AG04449 (cell line): ENCODE measurements at regions of chr6 and their contacts with region 1.

Region 1: GRCh38 chr6:30102970-30103874 is 9.7 kb downstream of the TRIM31 start:
- DNase-seq: peak; percentile 45
- H3K4me3 ChIP-seq: peak overlapping the region; percentile 56
- CTCF ChIP-seq: peak; percentile 86

Region 2: DNA sequence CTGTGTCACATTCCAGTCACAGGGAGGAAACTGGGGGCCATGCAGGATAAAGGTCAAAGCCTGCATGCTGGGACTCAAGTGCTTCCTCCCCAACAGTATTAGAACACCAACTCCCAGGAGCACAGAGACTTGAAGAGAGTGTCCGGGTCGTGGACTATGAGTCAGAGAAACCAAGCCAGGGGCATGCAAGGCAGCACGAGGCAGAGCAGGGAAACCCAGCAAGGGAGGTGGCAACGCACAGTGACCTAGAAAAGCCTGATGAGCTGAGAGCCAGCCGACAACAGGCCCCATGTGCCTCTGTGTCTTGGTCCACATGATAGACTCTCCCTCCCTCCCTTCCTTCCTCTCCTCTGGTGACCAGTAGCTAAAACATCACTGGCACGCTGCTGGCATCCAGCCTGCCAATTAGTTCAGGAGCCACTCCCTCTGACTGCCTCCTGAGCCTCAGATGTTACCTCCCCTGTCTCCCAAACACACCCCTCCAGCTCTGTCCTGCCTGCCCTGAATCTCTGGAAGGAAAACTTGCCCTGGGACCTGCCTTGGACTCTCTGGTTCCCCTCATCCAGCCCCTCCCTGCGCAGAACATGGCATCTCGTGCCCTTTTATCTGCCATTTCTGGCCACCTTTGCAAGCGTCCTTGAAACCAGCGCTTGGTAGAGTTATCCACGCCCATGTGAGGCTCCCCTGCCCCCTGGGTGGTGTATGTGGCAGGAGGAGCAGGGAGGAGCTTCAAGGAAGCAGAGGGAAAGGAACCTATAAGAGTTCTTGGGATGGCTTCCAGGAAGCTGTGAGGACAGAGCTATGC is 11.4 kb before region 1 on chr6:
- CTCF ChIA-PET with region 1: interaction called, 19 read pairs
- POLR2A ChIA-PET with region 1: interaction called, 4 read pairs
- DNase-seq: no peak
- H3K4me3 ChIP-seq: no peak overlapping the region
- CTCF ChIP-seq: no peak

Region 3: DNA sequence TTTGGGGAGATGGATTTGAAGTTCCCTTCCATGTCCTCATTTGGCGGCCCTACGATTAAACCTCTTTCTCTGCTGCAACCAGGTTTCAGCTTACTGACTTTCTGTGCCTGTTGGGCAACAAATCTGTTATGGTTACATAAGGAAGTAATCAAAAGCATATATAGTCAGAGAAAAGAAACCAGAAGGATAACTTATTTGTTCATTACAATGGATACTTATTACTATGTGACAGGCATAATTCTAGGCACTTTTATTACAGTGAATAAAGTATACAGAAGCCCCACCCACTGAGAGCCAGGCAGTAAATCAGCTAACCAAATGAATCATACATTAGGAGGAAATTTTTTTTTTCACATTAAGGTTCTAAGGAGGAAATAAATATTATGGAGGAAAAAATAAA is 19.3 kb after region 1 on chr6:
- CTCF ChIA-PET with region 1: interaction called, 49 read pairs
- POLR2A ChIA-PET with region 1: no interaction called
- DNase-seq: no peak
- H3K4me3 ChIP-seq: no peak overlapping the region
- CTCF ChIP-seq: no peak

Region 4: GRCh38 chr6:30169658-30170614 is 66.7 kb after region 1 on chr6:
- CTCF ChIA-PET with region 1: interaction called, 12 read pairs
- POLR2A ChIA-PET with region 1: no interaction called
- DNase-seq: peak; percentile 14
- H3K4me3 ChIP-seq: no peak overlapping the region
- CTCF ChIP-seq: peak; percentile 67